Activated T-helper 2 cell treated with anti-CD3 and anti-CD28 coated beads, Interferon-gamma antibody, Interleukin-2, Interleukin-4, amounts not matched to agents 10 μg/mL and 5 μg/mL and 100 μg/mL, durations not matched to agents 14 hours and 24 hours and 36 hours (primary cell): ENCODE measurements at regions of chr4 and their contacts with region 1.

Region 1: DNA sequence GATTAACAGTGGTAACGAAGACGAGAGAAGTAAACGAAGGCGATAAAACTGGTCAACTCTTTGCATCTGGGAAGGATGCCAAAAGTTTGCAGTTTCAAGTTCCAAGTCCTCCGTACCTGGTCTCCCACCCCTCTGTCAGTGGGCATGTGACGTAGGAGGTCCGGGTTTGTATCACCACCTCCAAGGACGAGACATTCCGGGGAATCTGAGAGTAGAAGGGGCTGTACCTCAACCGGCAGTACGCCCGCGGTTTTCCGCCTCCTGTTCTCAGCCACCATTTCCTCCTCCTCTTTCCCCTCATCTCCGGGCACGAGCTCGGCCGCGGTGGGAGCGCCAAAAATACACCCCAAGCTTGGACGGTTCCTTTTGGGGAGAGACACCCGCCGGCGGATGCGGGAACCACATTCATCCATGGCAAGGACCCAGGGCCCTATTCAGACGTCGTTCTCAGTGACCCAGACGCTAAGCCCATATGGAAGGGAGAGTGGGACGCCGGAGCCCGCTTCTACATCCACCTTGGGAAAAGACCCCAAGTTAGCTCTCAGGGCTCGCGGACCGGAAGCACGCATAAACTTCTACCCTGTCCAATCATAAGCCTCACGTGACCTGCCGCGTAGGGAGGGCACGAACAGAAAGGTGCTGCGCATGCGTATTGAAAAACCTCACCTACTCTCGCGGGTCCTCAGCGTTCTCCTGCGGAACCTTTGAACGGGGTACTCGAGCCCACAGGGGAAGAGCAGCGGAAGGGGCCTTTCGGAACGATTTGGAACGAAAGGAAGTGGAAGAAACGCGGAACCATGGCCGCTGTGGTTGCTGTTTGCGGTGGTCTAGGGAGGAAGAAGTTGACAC is at the starts of genes HELQ and MRPS18C:
- DNase-seq: peak; percentile 95
- H3K4me3 Mint-ChIP-seq: peak within 1 kb of the TSS; percentile 97
- H3K27ac Mint-ChIP-seq: peak within 1 kb of the TSS; percentile 98
- H3K4me1 Mint-ChIP-seq: peaks cover 34% of the 10 kb centered on the region
- H3K27me3 Mint-ChIP-seq: no peaks in the 10 kb centered on the region
- total RNA-seq, gene HELQ: 11.0 and 11.9 TPM in 2 replicates
- total RNA-seq, gene MRPS18C: 72.2 and 73.8 TPM in 2 replicates

Region 2: DNA sequence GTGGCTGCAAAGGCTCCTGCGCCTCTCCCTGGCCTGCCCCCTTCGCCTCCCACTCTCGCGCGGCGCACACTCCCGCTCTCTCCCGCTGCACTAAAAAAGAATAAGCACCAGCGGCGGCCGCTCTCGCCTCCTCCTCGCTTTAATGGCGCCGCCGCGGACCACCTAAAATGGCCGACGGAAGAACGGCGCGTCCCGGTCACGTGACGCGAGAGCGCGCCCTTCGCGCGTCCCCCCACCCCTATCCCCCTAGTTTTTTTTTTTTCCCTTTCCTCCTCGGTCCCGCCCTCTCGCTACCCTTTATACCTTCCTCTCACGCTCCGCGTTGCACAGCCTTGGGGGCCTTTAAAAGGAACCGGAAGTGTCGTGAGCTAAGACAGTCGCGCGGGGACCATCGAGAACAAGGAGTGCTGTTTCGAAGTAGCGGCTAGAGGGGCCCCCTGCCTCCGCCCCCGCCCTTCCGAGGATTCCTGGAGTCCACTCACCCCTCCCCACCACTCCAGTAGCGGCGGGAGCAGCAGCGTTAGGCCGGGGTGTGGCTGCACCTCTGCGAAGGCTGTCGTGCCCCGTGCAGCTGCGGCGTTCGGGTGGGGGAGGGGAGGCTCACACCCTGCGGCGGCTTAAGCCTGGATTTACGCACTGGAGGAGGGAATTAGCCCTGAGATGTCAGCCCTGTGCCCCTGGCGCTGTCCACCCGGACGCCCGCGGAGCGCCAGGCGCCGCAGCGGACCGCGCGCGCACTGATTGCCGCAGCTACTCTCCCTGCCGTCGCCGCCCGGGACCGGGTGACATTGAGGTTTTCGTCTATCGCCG is 1081.5 kb before region 1 on chr4 and contains the start of gene HNRNPD:
- intact Hi-C with region 1: loop called (anchors 5 kb)
- DNase-seq: peak; percentile 94
- H3K4me3 Mint-ChIP-seq: peak within 1 kb of the TSS; percentile 95
- H3K27ac Mint-ChIP-seq: peak within 1 kb of the TSS; percentile 96
- H3K4me1 Mint-ChIP-seq: peaks cover 25% of the 10 kb centered on the region
- H3K27me3 Mint-ChIP-seq: no peaks in the 10 kb centered on the region
- total RNA-seq, gene HNRNPD: 461 and 489 TPM in 2 replicates

Region 3: DNA sequence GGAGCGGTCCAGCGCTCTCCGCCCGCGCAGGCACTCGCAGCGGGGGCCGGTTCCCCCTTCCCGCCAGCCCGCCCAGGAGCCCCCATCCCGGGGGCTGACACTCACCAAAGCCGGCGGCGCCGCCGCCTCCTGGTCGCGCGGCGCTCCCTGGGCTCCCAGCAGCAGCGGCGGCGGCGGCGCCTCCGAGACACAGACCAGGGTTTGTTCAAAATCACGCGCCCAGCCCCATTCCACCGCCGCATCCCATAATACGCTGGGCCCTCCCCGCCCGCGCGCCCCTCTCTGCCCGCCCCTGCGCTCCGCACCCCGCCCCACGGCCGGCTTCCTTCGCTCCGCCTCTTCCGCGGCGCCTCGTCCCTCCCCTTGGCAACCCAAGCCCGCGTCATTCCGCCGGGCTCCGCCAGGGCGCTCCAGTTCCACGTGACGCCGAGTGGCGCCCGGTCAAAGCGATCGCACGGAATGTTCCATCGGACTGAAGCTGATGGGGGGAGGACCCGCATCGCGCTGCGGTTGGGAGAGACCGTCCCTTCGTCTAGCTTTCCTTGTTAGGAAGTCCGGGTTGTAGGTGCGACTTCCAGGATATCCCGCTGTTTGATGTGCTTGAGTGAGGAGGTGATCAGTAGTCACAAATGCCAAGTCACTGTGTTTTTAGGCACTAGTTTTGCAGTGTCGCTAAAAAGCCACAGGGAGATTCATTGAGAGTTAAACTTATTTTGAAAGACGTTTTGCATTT is 442.7 kb before region 1 on chr4:
- intact Hi-C with region 1: loop called (anchors 2 kb)
- DNase-seq: peak; percentile 96
- H3K4me3 Mint-ChIP-seq: peak overlapping the region; percentile 94
- H3K27ac Mint-ChIP-seq: peak overlapping the region; percentile 93
- H3K4me1 Mint-ChIP-seq: peaks cover 36% of the 10 kb centered on the region
- H3K27me3 Mint-ChIP-seq: no peaks in the 10 kb centered on the region

Region 4: DNA sequence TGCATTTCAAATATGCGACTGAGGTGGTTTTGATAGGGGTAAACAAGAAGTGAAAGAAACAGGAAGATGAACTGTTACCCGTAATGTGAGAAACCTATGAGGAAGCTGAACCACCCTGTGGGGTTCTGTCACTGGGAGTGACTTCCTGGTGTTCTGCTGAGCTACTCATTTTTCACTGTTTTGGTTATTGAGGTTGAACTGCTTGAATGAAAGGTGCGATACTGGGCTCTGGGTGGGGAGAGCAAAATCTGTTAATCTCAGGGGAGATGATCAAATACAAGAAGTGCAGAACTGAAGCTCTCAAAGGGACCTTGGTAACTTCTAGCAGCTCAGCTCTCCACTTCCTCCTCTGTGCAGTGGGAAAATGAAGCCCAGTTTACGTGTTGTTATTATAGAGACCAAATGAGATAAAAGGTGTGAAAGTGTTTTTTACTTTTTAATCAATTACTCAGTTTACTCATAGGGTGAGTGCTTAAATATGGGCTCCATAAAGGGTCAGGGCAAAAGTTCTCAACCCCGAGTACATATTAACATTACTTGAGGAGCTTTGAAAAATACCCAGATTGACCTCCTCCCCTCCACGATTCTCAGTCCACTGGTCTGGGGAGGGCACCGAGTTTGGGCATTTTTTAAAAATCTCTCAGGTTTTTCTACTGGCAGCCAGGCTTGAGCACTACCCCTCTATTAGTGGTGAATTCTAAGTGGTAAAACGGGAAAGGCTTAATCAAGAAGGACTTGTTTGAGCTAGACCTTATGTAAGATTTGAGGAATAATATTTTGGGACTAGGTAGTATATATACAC is 237.6 kb before region 1 on chr4:
- intact Hi-C with region 1: loop called (anchors 5 kb)
- DNase-seq: peak; percentile 74
- H3K4me3 Mint-ChIP-seq: peak overlapping the region; percentile 56
- H3K27ac Mint-ChIP-seq: peak overlapping the region; percentile 84
- H3K4me1 Mint-ChIP-seq: peaks cover 64% of the 10 kb centered on the region
- H3K27me3 Mint-ChIP-seq: peaks cover 13% of the 10 kb centered on the region

Region 5: GRCh38 chr4:83356899-83357661 is 98.4 kb before region 1 on chr4:
- intact Hi-C with region 1: loop called (anchors 1 kb)
- DNase-seq: no peak
- H3K4me3 Mint-ChIP-seq: no peak overlapping the region
- H3K27ac Mint-ChIP-seq: peak overlapping the region; percentile 85
- H3K4me1 Mint-ChIP-seq: peaks cover 24% of the 10 kb centered on the region
- H3K27me3 Mint-ChIP-seq: no peaks in the 10 kb centered on the region